CD8-positive, alpha-beta memory T cell (primary cell): ENCODE measurements at regions of chr19 and their contacts with region 1.

Region 1: GRCh38 chr19:52237771-52238400 is 31.5 kb upstream of the ZNF766 start:
- DNase-seq: peak; percentile 37 to 74 (median 42)
- H3K4me3 ChIP-seq: no peak overlapping the region
- H3K4me3 Mint-ChIP-seq: no peak overlapping the region
- H3K27ac ChIP-seq: no peak overlapping the region
- H3K27ac Mint-ChIP-seq: peak overlapping the region in 1 of 8 donors; percentile 43
- H3K4me1 ChIP-seq: no peaks in the 10 kb centered on the region
- H3K4me1 Mint-ChIP-seq: no peaks in the 10 kb centered on the region
- H3K27me3 ChIP-seq: no peaks in the 10 kb centered on the region
- H3K27me3 Mint-ChIP-seq: peaks cover 0 to 10% of the 10 kb centered on the region in 2 donors

Region 2: GRCh38 chr19:52139252-52140031 is 98.4 kb before region 1 on chr19 and contains the start of gene ZNF616:
- CTCF ChIA-PET with region 1: interaction called, 23 read pairs
- POLR2A ChIA-PET with region 1: interaction called, 3 read pairs
- DNase-seq: peak; percentile 63 to 98 (median 96)
- H3K4me3 ChIP-seq: peak within 1 kb of the TSS; percentile 100
- H3K4me3 Mint-ChIP-seq: peak within 1 kb of the TSS; percentile 90 to 99 (median 96)
- H3K27ac ChIP-seq: peak within 1 kb of the TSS; percentile 91
- H3K27ac Mint-ChIP-seq: peak within 1 kb of the TSS; percentile 79 to 99 (median 94)
- H3K4me1 ChIP-seq: peaks cover 22% of the 10 kb centered on the region
- H3K4me1 Mint-ChIP-seq: peaks cover 34 to 45% (median 36%) of the 10 kb centered on the region in 3 donors
- H3K27me3 ChIP-seq: no peaks in the 10 kb centered on the region
- H3K27me3 Mint-ChIP-seq: peaks cover 0 to 1% of the 10 kb centered on the region in 2 donors
- total RNA-seq, gene ZNF616: 11.2 to 12.6 TPM

Region 3: GRCh38 chr19:52285466-52285865 is 47.6 kb after region 1 on chr19:
- CTCF ChIA-PET with region 1: no interaction called
- POLR2A ChIA-PET with region 1: no interaction called
- DNase-seq: no peak
- H3K4me3 ChIP-seq: no peak overlapping the region
- H3K4me3 Mint-ChIP-seq: no peak overlapping the region
- H3K27ac ChIP-seq: no peak overlapping the region
- H3K27ac Mint-ChIP-seq: peak overlapping the region in 2 of 8 donors; percentile 61 to 85
- H3K4me1 ChIP-seq: no peaks in the 10 kb centered on the region
- H3K4me1 Mint-ChIP-seq: peaks cover 5 to 15% (median 9%) of the 10 kb centered on the region in 3 donors
- H3K27me3 ChIP-seq: no peaks in the 10 kb centered on the region
- H3K27me3 Mint-ChIP-seq: no peaks in the 10 kb centered on the region